ENCODE measurements at regions of chr22 and their contacts with region 1.

Region 1: DNA sequence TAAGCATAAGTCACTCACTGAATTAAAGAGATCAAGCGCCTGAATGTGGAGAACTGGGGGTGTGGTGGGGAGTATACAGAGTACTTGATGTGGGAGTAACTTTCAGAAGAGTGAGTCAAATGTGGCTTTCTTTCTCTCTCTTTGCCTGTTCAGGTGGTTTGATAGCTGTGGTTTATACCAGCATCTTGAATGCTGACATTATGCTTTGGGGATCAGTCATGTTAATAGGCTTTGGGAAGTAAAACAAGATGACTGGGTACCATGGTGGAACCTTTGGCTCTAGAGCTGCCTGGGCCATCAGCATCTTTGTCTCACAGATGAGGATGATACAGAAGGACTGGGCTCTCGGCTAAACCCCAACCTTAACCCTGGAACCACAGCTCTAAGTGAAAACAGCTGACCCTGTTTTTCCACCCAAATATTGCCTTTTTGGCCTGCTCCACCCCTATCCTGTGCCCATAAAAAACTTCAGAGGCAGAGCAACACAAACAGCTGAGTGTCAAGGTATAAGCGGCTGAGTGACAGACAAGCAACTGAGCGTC is 58.2 kb upstream of the GNAZ start:
- DNase-seq: peak; percentile 65
- H3K4me3 Mint-ChIP-seq: no peak overlapping the region
- H3K27ac Mint-ChIP-seq: peak overlapping the region; percentile 68
- H3K4me1 Mint-ChIP-seq: peaks cover 15% of the 10 kb centered on the region
- H3K27me3 Mint-ChIP-seq: peaks cover 37% of the 10 kb centered on the region

Region 2: GRCh38 chr22:22968366-22968765 is 43.8 kb before region 1 on chr22:
- CTCF ChIA-PET with region 1: no interaction called
- POLR2A ChIA-PET with region 1: no interaction called
- intact Hi-C with region 1: no loop called
- DNase-seq: no peak
- H3K4me3 Mint-ChIP-seq: no peak overlapping the region
- H3K27ac Mint-ChIP-seq: no peak overlapping the region
- H3K4me1 Mint-ChIP-seq: no peaks in the 10 kb centered on the region
- H3K27me3 Mint-ChIP-seq: peaks cover 61% of the 10 kb centered on the region

Region 3: DNA sequence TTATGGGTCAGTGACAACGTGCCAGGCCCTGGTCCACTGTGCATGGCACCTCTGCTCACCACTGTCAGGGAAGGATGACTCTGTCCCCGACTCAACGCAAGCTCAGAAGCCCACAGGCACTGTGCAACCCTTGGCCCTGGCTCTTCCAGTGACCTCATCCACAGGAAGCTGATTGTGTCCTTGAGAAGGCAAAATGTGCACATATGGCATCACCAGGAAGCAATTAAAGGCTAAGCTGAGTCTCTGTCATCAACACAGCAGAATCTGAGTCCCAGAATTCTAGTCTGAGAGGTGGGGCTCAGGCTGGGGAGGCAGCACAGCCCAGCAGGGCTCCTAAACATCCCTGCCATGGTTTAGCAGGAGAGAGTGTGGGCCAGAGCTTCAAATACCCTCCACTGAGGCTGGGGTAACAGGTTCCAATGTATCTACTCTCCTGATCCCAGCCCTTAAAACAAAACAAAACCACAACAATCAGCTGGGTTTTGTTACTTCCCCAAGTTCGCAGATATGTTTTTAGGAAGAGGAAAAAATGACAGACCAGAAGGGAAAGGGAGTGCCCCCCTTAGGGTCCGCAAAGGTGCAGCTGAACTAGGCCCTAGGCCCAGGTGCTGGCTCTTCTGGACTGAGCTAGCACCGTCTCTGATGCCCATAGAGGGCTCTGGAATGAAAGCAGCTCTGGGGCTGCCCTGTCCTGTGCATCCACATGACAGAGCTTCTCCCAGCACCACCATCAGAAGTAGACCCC is 24.7 kb after region 1 on chr22:
- CTCF ChIA-PET with region 1: no interaction called
- POLR2A ChIA-PET with region 1: interaction called, 5 read pairs
- intact Hi-C with region 1: loop called (anchors 1 kb)
- DNase-seq: no peak
- H3K4me3 Mint-ChIP-seq: no peak overlapping the region
- H3K27ac Mint-ChIP-seq: no peak overlapping the region
- H3K4me1 Mint-ChIP-seq: peaks cover 7% of the 10 kb centered on the region
- H3K27me3 Mint-ChIP-seq: peaks cover 24% of the 10 kb centered on the region

Region 4: DNA sequence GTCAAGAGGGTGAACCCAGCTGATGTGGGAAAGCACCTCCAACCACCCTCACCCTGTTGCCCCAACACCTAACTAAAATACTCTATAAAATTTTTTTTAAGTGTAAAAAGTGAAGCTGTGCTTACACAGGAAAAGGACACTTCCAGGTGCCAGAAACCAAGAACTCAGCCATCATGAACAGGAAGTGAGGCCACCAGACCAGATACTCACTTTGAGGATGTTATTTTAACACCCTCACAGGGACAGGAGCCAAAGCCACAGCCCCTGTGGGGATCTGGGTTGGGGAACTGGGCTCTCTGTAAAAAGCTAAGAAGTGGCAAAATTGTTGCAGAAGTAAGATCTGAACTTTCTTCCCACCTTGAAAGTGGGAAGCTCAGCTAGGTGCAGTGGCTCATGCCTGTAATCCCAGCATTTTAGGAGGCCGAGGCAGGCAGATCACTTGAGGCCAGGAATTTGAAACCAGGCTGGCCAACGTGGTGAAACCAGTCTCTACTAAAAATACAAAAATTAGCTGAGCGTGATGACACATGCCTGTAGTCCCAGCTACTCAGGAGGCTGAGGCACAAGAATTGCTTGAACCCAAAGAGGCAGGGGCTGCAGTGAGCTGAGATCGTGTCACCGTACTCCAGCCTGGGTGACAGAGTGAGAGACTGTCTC is 125.9 kb after region 1 on chr22:
- CTCF ChIA-PET with region 1: interaction called, 3 read pairs
- POLR2A ChIA-PET with region 1: no interaction called
- intact Hi-C with region 1: loop called (anchors 1 kb)
- DNase-seq: peak; percentile 61
- H3K4me3 Mint-ChIP-seq: no peak overlapping the region
- H3K27ac Mint-ChIP-seq: peak overlapping the region; percentile 92
- H3K4me1 Mint-ChIP-seq: peaks cover 48% of the 10 kb centered on the region
- H3K27me3 Mint-ChIP-seq: no peaks in the 10 kb centered on the region

Measured in activated CD4-positive, alpha-beta memory T cell treated with anti-CD3 and anti-CD28 coated beads for 36 hours (primary cell).